ENCODE measurements at regions of chr5 and their contacts with region 1.

Region 1: GRCh38 chr5:50962934-50963872 is 296.8 kb downstream of the PARP8 start:
- DNase-seq: peak; percentile 84
- H3K4me3 Mint-ChIP-seq: peak overlapping the region; percentile 70
- H3K27ac Mint-ChIP-seq: no peak overlapping the region
- H3K4me1 Mint-ChIP-seq: peaks cover 40% of the 10 kb centered on the region
- H3K27me3 Mint-ChIP-seq: peaks cover 64% of the 10 kb centered on the region

Region 2: GRCh38 chr5:50856401-50857119 is 106.6 kb before region 1 on chr5:
- CTCF ChIA-PET with region 1: no interaction called
- intact Hi-C with region 1: no loop called
- DNase-seq: no peak
- H3K4me3 Mint-ChIP-seq: no peak overlapping the region
- H3K27ac Mint-ChIP-seq: no peak overlapping the region
- H3K4me1 Mint-ChIP-seq: peaks cover 4% of the 10 kb centered on the region
- H3K27me3 Mint-ChIP-seq: peaks cover 7% of the 10 kb centered on the region

Region 3: GRCh38 chr5:51336878-51337277 is 373.7 kb after region 1 on chr5:
- CTCF ChIA-PET with region 1: no interaction called
- intact Hi-C with region 1: no loop called
- DNase-seq: no peak
- H3K4me3 Mint-ChIP-seq: no peak overlapping the region
- H3K27ac Mint-ChIP-seq: no peak overlapping the region
- H3K4me1 Mint-ChIP-seq: no peaks in the 10 kb centered on the region
- H3K27me3 Mint-ChIP-seq: no peaks in the 10 kb centered on the region

Region 4: DNA sequence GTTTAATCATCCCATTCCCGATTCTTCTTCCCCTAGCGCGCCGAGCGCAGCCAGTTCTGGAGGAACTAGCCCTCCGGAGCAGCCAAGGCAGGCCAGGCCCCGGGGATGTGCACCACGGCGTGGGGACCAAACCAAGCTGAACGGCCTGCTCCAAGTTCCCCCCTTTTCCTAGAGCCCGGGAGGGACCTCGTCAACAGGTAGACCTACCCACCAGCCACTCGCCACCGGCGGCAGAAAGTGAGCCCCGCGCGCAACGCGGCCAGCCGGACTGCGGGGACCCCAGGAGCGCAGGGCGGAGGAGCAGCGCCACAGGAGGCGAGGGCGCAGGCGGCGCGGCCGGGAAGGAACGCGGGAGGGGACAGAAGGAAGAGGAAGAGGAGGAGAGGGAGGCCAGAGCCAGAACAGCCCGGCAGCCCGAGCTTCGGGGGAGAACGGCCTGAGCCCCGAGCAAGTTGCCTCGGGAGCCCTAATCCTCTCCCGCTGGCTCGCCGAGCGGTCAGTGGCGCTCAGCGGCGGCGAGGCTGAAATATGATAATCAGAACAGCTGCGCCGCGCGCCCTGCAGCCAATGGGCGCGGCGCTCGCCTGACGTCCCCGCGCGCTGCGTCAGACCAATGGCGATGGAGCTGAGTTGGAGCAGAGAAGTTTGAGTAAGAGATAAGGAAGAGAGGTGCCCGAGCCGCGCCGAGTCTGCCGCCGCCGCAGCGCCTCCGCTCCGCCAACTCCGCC is 419.7 kb after region 1 on chr5 and contains the start of gene ISL1:
- CTCF ChIA-PET with region 1: interaction called, 3 read pairs
- intact Hi-C with region 1: loop called (anchors 2 kb)
- DNase-seq: no peak
- H3K4me3 Mint-ChIP-seq: peak within 1 kb of the TSS; percentile 19
- H3K27ac Mint-ChIP-seq: no peak within 1 kb of the TSS
- H3K4me1 Mint-ChIP-seq: peaks cover 16% of the 10 kb centered on the region
- H3K27me3 Mint-ChIP-seq: peaks cover 91% of the 10 kb centered on the region
- total RNA-seq, gene ISL1: not detected

Region 5: GRCh38 chr5:52007230-52007858 is 1044.1 kb after region 1 on chr5:
- CTCF ChIA-PET with region 1: interaction called, 3 read pairs
- intact Hi-C with region 1: loop called (anchors 1 kb)
- DNase-seq: no peak
- H3K4me3 Mint-ChIP-seq: no peak overlapping the region
- H3K27ac Mint-ChIP-seq: no peak overlapping the region
- H3K4me1 Mint-ChIP-seq: no peaks in the 10 kb centered on the region
- H3K27me3 Mint-ChIP-seq: no peaks in the 10 kb centered on the region

Region 6: GRCh38 chr5:52560366-52560765 is 1597.2 kb after region 1 on chr5:
- CTCF ChIA-PET with region 1: interaction called, 3 read pairs
- intact Hi-C with region 1: loop called (anchors 1 kb)
- DNase-seq: no peak
- H3K4me3 Mint-ChIP-seq: no peak overlapping the region
- H3K27ac Mint-ChIP-seq: no peak overlapping the region
- H3K4me1 Mint-ChIP-seq: no peaks in the 10 kb centered on the region
- H3K27me3 Mint-ChIP-seq: peaks cover 2% of the 10 kb centered on the region

Region 7: GRCh38 chr5:52771343-52772039 is 1808.3 kb after region 1 on chr5:
- CTCF ChIA-PET with region 1: no interaction called
- intact Hi-C with region 1: loop called (anchors 10 kb)
- DNase-seq: peak; percentile 63
- H3K4me3 Mint-ChIP-seq: no peak overlapping the region
- H3K27ac Mint-ChIP-seq: no peak overlapping the region
- H3K4me1 Mint-ChIP-seq: peaks cover 46% of the 10 kb centered on the region
- H3K27me3 Mint-ChIP-seq: no peaks in the 10 kb centered on the region